ENCODE measurements at regions of chr2 and their contacts with region 1.

Region 1: DNA sequence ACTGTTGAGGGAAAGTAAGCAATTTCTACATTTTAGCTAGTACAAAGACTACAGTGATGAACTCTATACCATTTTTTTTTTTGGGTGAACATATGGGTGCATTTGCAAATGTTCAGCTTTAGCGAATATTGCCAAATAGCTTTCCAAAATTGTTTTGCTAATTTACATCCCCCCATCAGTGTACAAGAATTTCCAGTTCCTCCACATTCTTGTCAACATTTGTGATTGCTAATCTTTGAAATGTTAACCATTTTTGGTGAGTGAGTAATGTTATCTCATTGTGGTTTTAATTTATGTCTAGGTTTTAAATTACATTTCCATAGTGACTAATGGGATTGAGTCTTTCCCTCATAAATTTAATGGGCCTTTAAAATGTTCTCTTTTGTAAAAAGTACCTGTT is 16.4 kb upstream of the CNRIP1 start:
- DNase-seq: peak; percentile 98
- ATAC-seq: peak; percentile 89
- H3K4me3 ChIP-seq: peak overlapping the region; percentile 26; the same call in 1 of the 2 replicates
- H3K27ac ChIP-seq: peak overlapping the region; percentile 63
- H3K4me1 ChIP-seq: peaks cover 33% of the 10 kb centered on the region
- H3K27me3 ChIP-seq: no peaks in the 10 kb centered on the region
- CTCF ChIP-seq: no peak

Region 2: DNA sequence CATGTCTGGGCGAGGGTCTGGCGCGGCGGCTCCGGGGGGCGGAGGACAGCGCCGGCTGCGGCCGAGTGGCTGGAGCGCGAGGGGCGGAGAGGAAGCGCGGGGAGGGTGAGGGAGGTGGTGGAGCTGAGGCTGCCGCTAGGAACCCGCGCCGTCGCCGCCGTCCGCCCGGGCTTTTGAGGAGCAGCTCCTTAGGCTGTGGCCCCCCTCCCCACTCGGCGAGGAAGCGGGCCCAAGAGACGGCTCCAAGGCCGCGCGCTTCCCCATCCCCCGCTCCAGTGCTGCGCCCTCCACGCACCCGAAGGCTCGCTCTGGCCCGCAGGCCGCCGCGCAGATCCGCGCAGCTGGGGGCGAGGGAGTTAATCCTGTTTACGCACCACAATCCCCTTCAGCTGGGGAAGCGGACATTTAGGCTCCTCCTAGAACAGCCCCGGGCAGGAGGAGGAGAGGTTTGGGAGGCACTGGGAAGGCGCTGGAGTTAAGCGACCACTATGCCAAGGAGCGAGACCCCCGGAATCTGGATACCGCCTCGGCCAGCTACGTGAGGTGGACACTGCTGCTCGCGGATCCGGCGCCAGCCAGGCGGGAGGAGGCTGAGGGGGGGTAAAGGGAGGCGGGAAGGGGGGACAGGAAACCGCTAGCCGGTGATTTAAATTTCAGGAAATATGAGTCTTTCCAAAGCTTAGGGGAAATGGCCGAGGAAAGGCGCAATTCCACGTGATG is 16.6 kb before region 1 on chr2 and contains the start of gene CNRIP1:
- CTCF ChIA-PET with region 1: no interaction called
- POLR2A ChIA-PET with region 1: interaction called, 3 read pairs
- intact Hi-C with region 1: loop called (anchors 1 kb)
- DNase-seq: peak; percentile 16
- ATAC-seq: peak; percentile 71
- H3K4me3 ChIP-seq: peak within 1 kb of the TSS; percentile 86
- H3K27ac ChIP-seq: peak within 1 kb of the TSS; percentile 62
- H3K4me1 ChIP-seq: peaks cover 16% of the 10 kb centered on the region
- H3K27me3 ChIP-seq: no peaks in the 10 kb centered on the region
- CTCF ChIP-seq: no peak
- total RNA-seq, gene CNRIP1: 11.6 and 11.7 TPM in 2 replicates

Region 3: DNA sequence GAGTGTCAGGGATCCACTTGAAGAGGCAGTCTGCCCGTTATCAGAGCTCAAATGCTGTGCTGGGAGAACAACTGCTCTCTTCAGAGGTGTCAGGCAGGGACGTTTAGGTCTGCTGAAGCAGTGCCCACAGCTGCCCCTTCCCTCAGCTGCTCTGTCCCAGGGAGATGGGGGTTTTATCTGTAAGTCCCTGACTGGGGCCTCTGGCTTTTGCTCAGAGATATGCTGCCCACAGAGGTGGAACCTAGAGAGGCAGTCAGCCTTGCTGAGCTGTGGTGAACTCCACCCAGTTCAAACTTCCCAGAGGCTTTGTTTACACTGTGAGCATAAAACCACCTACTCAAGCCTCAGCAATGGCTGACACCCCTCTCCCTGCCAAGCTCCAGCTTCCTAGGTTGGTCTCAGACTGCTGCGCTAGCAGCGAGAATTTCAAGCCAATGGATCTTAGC is 67.0 kb after region 1 on chr2:
- CTCF ChIA-PET with region 1: no interaction called
- POLR2A ChIA-PET with region 1: no interaction called
- intact Hi-C with region 1: no loop called
- DNase-seq: peak; percentile 29
- ATAC-seq: peak; percentile 54; the same call in 1 of the 2 replicates
- H3K4me3 ChIP-seq: no peak overlapping the region
- H3K27ac ChIP-seq: no peak overlapping the region
- H3K4me1 ChIP-seq: no peaks in the 10 kb centered on the region; the same call in 1 of the 2 replicates
- H3K27me3 ChIP-seq: peaks cover 15% of the 10 kb centered on the region; the same call in 1 of the 2 replicates
- CTCF ChIP-seq: no peak

Region 4: DNA sequence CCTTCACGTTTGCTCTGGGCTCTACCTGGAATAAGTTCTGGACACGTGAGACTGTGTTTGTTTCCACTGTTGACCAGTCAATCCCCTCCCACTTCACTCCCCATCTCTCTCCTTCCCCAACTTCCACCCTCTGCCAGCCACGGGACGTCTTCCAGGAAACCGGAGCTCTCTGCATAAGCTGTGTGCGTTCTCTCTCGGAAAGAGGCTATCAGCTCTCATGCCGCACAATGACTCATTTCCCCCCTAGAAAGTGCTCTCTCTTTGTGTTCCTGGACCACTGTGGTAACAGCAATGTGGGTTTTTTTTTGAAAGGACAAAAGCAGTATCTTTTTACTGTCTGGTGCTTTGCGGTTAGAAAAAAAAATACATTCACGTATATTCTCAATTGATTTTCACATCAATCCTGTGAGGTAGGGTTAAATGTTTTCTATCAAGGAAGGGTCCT is 317.4 kb after region 1 on chr2:
- CTCF ChIA-PET with region 1: no interaction called
- POLR2A ChIA-PET with region 1: interaction called, 13 read pairs
- intact Hi-C with region 1: no loop called
- DNase-seq: peak; percentile 76
- ATAC-seq: peak; percentile 93
- H3K4me3 ChIP-seq: no peak overlapping the region
- H3K27ac ChIP-seq: no peak overlapping the region
- H3K4me1 ChIP-seq: peaks cover 10% of the 10 kb centered on the region; the same call in 1 of the 2 replicates
- H3K27me3 ChIP-seq: peaks cover 27% of the 10 kb centered on the region
- CTCF ChIP-seq: no peak